ENCODE measurements at regions of chr14 and their contacts with region 1.

Region 1: GRCh38 chr14:24058260-24058950 is 6.6 kb downstream of the CARMIL3 start:
- DNase-seq: peak; percentile 62
- ATAC-seq: peak; percentile 83
- H3K4me3 ChIP-seq: no peak overlapping the region
- H3K27ac ChIP-seq: no peak overlapping the region
- H3K4me1 ChIP-seq: no peaks in the 10 kb centered on the region
- H3K27me3 ChIP-seq: no peaks in the 10 kb centered on the region
- CTCF ChIP-seq: peak; percentile 75

Region 2: GRCh38 chr14:24108336-24108874 is 50.0 kb after region 1 on chr14:
- intact Hi-C with region 1: loop called (anchors 10 kb)
- DNase-seq: no peak
- ATAC-seq: no peak
- H3K4me3 ChIP-seq: no peak overlapping the region
- H3K27ac ChIP-seq: peak overlapping the region; percentile 69
- H3K4me1 ChIP-seq: peaks cover 10% of the 10 kb centered on the region
- H3K27me3 ChIP-seq: no peaks in the 10 kb centered on the region
- CTCF ChIP-seq: no peak

Region 3: DNA sequence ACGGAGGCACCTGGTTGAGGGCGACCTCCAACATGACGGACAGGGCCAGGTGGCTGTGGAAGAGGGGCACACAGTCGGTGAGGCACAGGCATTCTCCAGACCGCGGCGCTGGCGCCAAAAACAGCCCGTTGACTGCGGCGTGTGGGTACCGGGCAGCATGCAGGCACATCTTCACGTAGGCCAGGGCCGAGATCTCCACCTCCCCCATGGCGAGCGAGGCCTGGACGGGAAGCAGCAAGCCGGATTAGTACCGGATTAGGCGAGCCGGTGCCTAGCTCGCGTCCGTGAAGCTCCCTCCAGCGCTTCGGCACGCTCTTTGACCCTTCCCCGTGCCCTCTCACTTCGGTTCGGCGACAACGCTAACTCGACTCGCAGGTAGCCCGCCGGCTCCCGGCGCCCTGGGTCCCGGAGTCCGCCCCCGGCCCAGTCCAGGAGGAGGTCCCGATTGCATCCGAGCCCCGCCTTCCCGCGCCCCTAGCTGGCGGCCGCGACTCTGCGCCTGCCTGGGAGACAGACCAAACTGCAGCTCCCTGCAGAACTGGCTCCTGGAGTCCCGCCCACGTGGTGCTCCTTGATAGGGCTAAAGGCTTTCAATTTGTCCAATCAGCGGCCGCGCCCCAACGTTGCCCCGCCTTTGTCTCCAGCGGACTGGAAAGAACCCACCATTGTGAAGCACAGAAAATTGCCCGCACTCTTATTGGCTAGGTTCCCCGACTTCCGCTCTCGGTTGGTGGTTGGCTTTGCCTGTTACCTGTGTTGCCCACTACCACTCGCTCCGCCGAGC is 82.9 kb after region 1 on chr14 and contains the start of gene EMC9:
- intact Hi-C with region 1: no loop called
- DNase-seq: peak; percentile 100
- ATAC-seq: peak; percentile 95
- H3K4me3 ChIP-seq: peak within 1 kb of the TSS; percentile 77
- H3K27ac ChIP-seq: peak within 1 kb of the TSS; percentile 86
- H3K4me1 ChIP-seq: peaks cover 42% of the 10 kb centered on the region
- H3K27me3 ChIP-seq: no peaks in the 10 kb centered on the region
- CTCF ChIP-seq: peak; percentile 46
- total RNA-seq, gene EMC9: 10.5 TPM